Activated T-helper 1 cell treated with anti-CD3 and anti-CD28 coated beads, Interleukin-12 subunit alpha, Interleukin-12 subunit beta, Interleukin-2, Interleukin-4 antibody, amounts not matched to agents 30 ng/mL and 10 ng/mL and 1 ng/mL, durations not matched to agents 14 hours and 24 hours and 36 hours (primary cell): ENCODE measurements at regions of chrX and their contacts with region 1.

Region 1: GRCh38 chrX:78139160-78140123 is at the start of gene TAF9B:
- DNase-seq: peak; percentile 78
- H3K4me3 Mint-ChIP-seq: peak within 1 kb of the TSS; percentile 92
- H3K27ac Mint-ChIP-seq: peak within 1 kb of the TSS; percentile 86
- H3K4me1 Mint-ChIP-seq: no peaks in the 10 kb centered on the region
- H3K27me3 Mint-ChIP-seq: no peaks in the 10 kb centered on the region
- total RNA-seq, gene TAF9B: 14.9 and 15.0 TPM in 2 replicates

Region 2: GRCh38 chrX:78314571-78314970 is 175.1 kb after region 1 on chrX:
- intact Hi-C with region 1: loop called (anchors 5 kb)
- DNase-seq: no peak
- H3K4me3 Mint-ChIP-seq: peak overlapping the region; percentile 19
- H3K27ac Mint-ChIP-seq: peak overlapping the region; percentile 92
- H3K4me1 Mint-ChIP-seq: peaks cover 74% of the 10 kb centered on the region
- H3K27me3 Mint-ChIP-seq: no peaks in the 10 kb centered on the region